Astrocyte of the cerebellum (primary cell): ENCODE measurements at regions of chr6 and their contacts with region 1.

Region 1: DNA sequence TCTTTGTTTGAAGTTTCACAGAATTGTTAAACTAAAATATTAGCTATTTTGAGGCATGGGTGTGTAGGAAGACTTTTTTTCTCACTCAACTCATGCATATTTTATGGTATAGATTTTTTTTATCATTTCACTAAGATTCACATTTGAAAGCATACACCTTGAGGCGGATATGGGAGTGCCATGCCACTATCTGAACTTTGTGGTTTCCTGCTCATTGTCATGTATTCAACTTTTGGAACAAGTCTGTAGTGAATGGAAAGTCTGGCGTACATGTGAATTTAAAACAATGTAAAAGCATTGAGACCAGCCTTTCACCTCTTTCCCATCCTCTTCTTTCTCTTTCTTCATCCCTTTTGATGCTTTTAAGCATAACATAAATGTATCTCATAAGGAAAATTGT is 147.9 kb downstream of the TPBG start:
- DNase-seq: no peak
- H3K4me3 ChIP-seq: no peak overlapping the region
- CTCF ChIP-seq: no peak

Region 2: DNA sequence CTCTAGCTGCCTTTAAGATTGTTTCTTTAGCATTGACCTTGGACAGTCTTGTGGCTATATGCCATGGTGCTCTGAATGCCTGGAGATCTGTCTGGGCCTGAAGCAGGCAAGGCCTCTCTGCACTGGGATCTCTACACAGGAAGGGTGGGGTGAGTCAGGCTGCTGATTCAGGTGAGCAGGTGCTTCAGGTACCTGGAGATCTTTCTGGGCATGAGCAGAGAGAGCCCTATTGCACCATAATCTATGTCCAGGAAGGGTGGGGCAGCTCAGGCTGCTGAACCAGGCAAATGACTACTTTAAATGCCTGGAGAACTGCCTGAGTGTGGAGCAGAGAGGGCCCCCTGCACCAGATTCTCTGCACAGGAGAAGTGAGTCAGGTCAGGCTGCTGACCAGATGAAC is 53.4 kb before region 1 on chr6:
- in situ Hi-C with region 1: loop called (anchors 5 kb)
- DNase-seq: no peak
- H3K4me3 ChIP-seq: no peak overlapping the region
- CTCF ChIP-seq: no peak